Colonic mucosa (tissue), 4 donors: ENCODE measurements at regions of chr13 and their contacts with region 1.

Region 1: GRCh38 chr13:33229446-33230177 is 55.9 kb downstream of the STARD13 start:
- DNase-seq: no peak
- H3K4me3 ChIP-seq: no peak overlapping the region
- H3K27ac ChIP-seq: peak overlapping the region; percentile 58
- H3K4me1 ChIP-seq: no peaks in the 10 kb centered on the region
- H3K27me3 ChIP-seq: no peaks in the 10 kb centered on the region
- CTCF ChIP-seq: no peak

Region 2: DNA sequence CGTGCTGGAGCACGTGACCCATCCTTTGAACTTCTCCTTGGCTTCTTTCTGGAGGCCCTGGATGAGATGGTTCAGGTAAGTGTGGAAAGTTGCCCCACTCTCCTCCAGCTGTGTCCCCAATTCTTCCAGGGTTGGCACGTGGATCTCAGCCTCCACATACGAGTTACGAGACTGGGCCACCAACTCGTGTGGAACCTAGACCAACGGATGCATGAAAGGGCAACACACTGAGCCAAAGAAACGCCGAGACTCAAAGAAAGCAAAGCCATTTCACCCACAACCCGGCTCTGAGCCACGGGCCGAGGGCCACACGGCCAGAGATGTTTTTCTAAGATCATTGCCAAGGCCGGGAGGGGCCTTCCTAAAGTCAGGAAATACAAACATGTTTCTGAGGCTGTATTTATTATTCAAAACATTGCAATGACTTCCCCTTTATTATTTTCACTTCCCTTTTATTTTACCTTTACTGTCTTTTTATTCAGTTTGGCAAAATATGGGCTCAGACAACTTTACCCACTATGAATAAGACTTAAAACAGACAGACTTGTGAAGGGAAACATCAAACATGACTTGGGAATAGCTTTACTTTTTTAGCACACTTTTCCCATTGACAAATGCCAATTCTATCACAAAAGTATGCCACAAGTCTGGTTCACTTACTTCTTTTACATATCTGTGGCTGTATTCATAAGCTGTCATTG is 118.7 kb before region 1 on chr13:
- intact Hi-C with region 1: no loop called
- DNase-seq: peak; percentile 33
- H3K4me3 ChIP-seq: no peak overlapping the region
- H3K27ac ChIP-seq: peak overlapping the region; percentile 15
- H3K4me1 ChIP-seq: no peaks in the 10 kb centered on the region
- H3K27me3 ChIP-seq: no peaks in the 10 kb centered on the region
- CTCF ChIP-seq: no peak

Region 3: GRCh38 chr13:33153421-33154404 is 75.9 kb before region 1 on chr13:
- intact Hi-C with region 1: no loop called
- DNase-seq: no peak
- H3K4me3 ChIP-seq: no peak overlapping the region
- H3K27ac ChIP-seq: no peak overlapping the region
- H3K4me1 ChIP-seq: no peaks in the 10 kb centered on the region
- H3K27me3 ChIP-seq: no peaks in the 10 kb centered on the region
- CTCF ChIP-seq: no peak

Region 4: GRCh38 chr13:33441015-33441414 is 211.4 kb after region 1 on chr13:
- intact Hi-C with region 1: loop called (anchors 10 kb)
- DNase-seq: peak; percentile 43
- H3K4me3 ChIP-seq: no peak overlapping the region
- H3K27ac ChIP-seq: no peak overlapping the region
- H3K4me1 ChIP-seq: no peaks in the 10 kb centered on the region
- H3K27me3 ChIP-seq: no peaks in the 10 kb centered on the region
- CTCF ChIP-seq: no peak